A549 (cell line): ENCODE measurements at regions of chr15 and their contacts with region 1.

Region 1: DNA sequence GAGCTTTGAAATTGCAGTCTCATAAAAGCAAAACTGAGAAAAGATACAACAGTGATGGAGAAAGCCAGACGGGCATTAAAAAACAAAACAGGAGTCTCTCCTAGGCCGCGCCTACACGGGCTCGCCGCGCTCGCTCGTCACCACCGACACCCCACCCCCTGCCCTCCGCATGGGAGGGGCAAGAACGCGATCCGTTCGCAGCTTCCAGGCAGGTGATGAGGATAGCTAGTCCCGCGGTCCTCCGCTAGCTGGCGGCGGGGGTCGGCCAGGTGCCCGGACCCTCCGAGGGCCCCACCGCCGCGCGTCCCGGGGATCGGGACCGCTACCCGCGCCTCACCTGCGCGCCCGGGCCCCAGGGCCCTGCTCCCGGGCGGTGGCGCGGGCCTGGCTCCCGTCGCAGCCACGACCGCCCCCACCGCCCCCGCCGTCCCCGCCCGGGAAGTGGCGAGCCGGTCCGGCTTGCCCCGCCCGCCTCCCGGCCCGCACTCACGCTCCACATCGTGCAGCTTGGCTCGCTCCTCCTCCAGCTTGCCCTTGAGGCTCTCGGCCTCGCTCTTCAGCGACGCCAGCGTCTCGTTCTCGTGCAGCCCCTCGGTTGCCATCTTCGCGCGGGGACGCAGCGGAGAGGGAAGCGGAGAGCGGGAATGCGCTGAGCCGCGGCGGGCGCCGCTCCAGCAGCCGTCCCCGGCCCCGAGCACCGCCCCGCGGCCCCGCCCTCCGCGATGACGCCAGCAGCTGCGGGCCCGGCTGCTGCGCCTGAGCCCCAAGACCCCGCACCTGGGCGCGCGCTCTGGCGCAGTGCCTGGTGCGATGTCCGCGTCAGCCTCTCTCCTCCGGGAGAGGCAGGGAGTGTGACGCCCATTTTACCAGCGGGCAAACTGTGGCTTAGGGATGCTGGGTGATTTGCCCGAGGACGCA is 11.7 kb downstream of the GNB5 start:
- DNase-seq: peak; percentile 90 to 98
- ATAC-seq: peak; percentile 90 to 92
- H3K4me3 ChIP-seq: peak overlapping the region; percentile 68
- H3K27ac ChIP-seq: peak overlapping the region; percentile 92 to 97
- H3K4me1 ChIP-seq: peaks cover 12% of the 10 kb centered on the region
- CTCF ChIP-seq: peak; percentile 15; the same call in 1 of the 3 replicates
- EP300 ChIP-seq: no peak
- POLR2A ChIP-seq: peak; percentile 90
- RAD21 ChIP-seq: no peak; a peak in 1 of 5 replicates

Region 2: DNA sequence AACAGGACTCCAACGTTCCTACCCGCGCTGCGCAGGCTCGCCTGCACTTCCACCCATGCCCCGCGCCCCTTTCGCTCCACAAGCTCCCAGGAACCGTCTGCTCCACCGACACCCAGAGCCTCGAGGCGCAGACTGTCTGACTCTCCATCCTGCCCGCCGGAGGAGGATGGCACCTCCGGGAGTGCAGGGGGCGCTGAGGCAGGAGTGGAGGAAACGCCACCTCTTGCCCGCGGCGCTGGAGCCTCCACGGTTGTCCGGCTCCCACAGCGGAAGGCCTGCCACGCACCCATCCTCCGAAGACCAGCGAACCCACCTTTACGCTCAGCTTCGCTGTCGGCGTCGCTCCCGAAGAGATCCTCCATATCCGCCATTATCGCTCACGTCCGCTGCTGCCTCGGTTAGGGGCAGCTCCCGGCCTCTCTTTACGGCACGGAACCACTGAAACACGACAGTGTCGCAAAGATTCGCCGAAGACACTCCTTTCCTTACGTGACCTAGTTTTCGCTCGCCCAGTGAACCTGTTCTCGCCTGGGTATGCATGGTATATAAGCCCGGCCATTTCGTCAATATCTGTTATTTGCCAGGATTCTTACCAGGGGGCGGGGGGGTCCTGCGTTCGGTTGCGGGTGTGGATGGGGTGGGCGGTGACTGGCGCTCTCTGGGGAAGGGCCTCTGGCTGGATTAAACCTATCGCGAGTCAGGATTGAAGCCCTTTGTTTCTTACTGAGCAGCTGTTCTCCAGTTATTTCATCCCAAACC is 208.0 kb before region 1 on chr15 and contains the start of gene LEO1:
- CTCF ChIA-PET with region 1: no interaction called
- POLR2A ChIA-PET with region 1: interaction called, 10 read pairs
- DNase-seq: peak; percentile 99
- ATAC-seq: peak; percentile 94 to 98
- H3K4me3 ChIP-seq: peak within 1 kb of the TSS; percentile 68
- H3K27ac ChIP-seq: peak within 1 kb of the TSS; percentile 83 to 95
- H3K4me1 ChIP-seq: peaks cover 13% of the 10 kb centered on the region
- CTCF ChIP-seq: peak; percentile 51
- EP300 ChIP-seq: no peak
- POLR2A ChIP-seq: peak; percentile 93
- RAD21 ChIP-seq: peak in 1 of 2 experiments; percentile 32; a peak in 1 of 5 replicates
- polyA plus RNA-seq, gene LEO1: 19.2 and 22.3 TPM in 2 replicates

Region 3: DNA sequence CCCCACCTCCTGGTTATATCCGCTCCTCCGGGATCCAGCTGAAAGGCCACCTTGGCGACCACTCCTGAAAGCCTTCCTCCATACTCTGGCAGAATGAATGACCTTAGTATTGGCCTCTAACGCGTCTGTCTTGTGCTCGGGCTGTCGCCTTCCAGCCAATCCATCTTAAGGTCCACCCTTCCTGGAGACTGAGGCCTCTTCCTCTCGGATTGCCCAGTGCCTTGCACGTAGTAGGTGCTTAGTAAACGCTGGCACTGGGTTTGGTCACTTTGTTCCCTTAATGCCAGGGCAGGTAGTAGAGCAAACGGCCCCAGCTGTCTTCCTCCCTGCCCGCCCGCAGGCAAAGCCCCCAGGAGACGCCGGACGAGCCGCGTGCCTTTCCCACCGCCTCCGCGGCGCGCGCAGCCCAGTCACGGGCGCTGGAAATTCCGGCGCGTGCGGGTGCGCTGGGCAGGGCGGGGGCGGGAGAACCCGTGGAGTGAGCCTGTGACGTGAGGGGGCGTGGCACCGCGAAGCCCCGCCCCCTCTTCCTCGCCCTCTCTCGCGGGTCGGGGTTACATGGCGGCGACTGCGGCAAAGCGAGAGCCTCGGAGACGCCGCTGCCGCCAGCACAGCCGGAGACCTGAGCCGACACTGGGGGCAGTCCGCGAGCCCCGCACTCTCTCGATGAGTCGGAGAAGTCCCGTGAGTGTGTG is 160.7 kb before region 1 on chr15 and contains the start of gene MAPK6:
- CTCF ChIA-PET with region 1: interaction called, 6 read pairs
- POLR2A ChIA-PET with region 1: interaction called, 11 read pairs
- DNase-seq: peak; percentile 93 to 95
- ATAC-seq: peak; percentile 72 to 78
- H3K4me3 ChIP-seq: peak within 1 kb of the TSS; percentile 54
- H3K27ac ChIP-seq: peak within 1 kb of the TSS; percentile 79 to 97
- H3K4me1 ChIP-seq: peaks cover 25% of the 10 kb centered on the region; the same call in 2 of the 3 replicates
- CTCF ChIP-seq: no peak
- EP300 ChIP-seq: no peak
- POLR2A ChIP-seq: peak; percentile 79
- RAD21 ChIP-seq: peak; percentile 5 to 31; a peak in 2 of 5 replicates
- polyA plus RNA-seq, gene MAPK6: 94.7 and 126 TPM in 2 replicates

Region 4: GRCh38 chr15:52163321-52164190 is 16.0 kb before region 1 on chr15:
- CTCF ChIA-PET with region 1: interaction called, 18 read pairs
- POLR2A ChIA-PET with region 1: interaction called, 11 read pairs
- DNase-seq: no peak
- ATAC-seq: peak in 1 of 2 experiments; percentile 83; a peak in 3 of 6 replicates
- H3K4me3 ChIP-seq: no peak overlapping the region
- H3K27ac ChIP-seq: no peak overlapping the region
- H3K4me1 ChIP-seq: peaks cover 12% of the 10 kb centered on the region; the same call in 2 of the 3 replicates
- CTCF ChIP-seq: 0 out of 3 replicates have a peak, but pooled peaks have one; percentile 18
- EP300 ChIP-seq: no peak
- POLR2A ChIP-seq: no peak
- RAD21 ChIP-seq: peak in 1 of 2 experiments; percentile 37; a peak in 2 of 5 replicates

Region 5: DNA sequence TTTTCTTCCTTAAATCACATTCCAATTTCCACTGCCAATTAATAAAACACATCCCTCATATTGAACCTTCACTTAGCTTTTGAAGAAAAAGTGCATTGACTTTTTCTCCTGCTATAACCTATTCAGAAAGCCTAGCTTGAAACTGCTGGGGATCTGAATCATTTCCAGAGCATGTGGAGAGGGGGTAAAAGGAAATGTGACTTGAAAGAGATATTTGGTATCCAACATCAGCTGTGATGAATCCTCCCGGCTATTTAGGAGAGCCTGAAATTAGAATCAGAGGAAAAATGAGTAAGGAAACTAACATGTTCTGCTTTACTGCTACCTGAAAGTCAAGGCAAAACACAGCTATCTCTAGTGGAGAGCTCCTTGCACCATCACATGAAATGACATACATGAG is 14.3 kb after region 1 on chr15:
- CTCF ChIA-PET with region 1: interaction called, 19 read pairs
- POLR2A ChIA-PET with region 1: interaction called, 8 read pairs
- DNase-seq: no peak
- ATAC-seq: no peak
- H3K4me3 ChIP-seq: no peak overlapping the region
- H3K27ac ChIP-seq: no peak overlapping the region
- H3K4me1 ChIP-seq: no peaks in the 10 kb centered on the region
- CTCF ChIP-seq: no peak
- EP300 ChIP-seq: no peak
- POLR2A ChIP-seq: no peak
- RAD21 ChIP-seq: no peak

Region 6: GRCh38 chr15:52208306-52208946 is 28.9 kb after region 1 on chr15:
- CTCF ChIA-PET with region 1: interaction called, 17 read pairs
- POLR2A ChIA-PET with region 1: no interaction called
- DNase-seq: peak; percentile 81
- ATAC-seq: peak; percentile 91 to 98
- H3K4me3 ChIP-seq: no peak overlapping the region
- H3K27ac ChIP-seq: no peak overlapping the region
- H3K4me1 ChIP-seq: no peaks in the 10 kb centered on the region
- CTCF ChIP-seq: peak; percentile 86
- EP300 ChIP-seq: no peak
- POLR2A ChIP-seq: no peak
- RAD21 ChIP-seq: peak; percentile 62 to 78

Region 7: GRCh38 chr15:52349052-52349700 is 169.6 kb after region 1 on chr15:
- CTCF ChIA-PET with region 1: no interaction called
- POLR2A ChIA-PET with region 1: no interaction called
- DNase-seq: peak in 1 of 2 experiments; percentile 26
- ATAC-seq: peak; percentile 67 to 72; a peak in 5 of 6 replicates
- H3K4me3 ChIP-seq: no peak overlapping the region
- H3K27ac ChIP-seq: no peak overlapping the region
- H3K4me1 ChIP-seq: peaks cover 2% of the 10 kb centered on the region; the same call in 2 of the 3 replicates
- CTCF ChIP-seq: no peak
- EP300 ChIP-seq: no peak
- POLR2A ChIP-seq: no peak
- RAD21 ChIP-seq: 0 out of 5 replicates have a peak, but pooled peaks of 1 of the 2 experiments have one; percentile 6

Region 8: GRCh38 chr15:52735231-52736089 is 555.9 kb after region 1 on chr15:
- CTCF ChIA-PET with region 1: interaction called, 11 read pairs
- POLR2A ChIA-PET with region 1: no interaction called
- DNase-seq: peak; percentile 83
- ATAC-seq: peak; percentile 90 to 96; a peak in 5 of 6 replicates
- H3K4me3 ChIP-seq: no peak overlapping the region
- H3K27ac ChIP-seq: no peak overlapping the region
- H3K4me1 ChIP-seq: no peaks in the 10 kb centered on the region
- CTCF ChIP-seq: peak; percentile 95
- EP300 ChIP-seq: no peak
- POLR2A ChIP-seq: no peak
- RAD21 ChIP-seq: peak; percentile 98 to 99